Gastrocnemius medialis (tissue), 4 donors: ENCODE measurements at regions of chr19 and their contacts with region 1.

Region 1: DNA sequence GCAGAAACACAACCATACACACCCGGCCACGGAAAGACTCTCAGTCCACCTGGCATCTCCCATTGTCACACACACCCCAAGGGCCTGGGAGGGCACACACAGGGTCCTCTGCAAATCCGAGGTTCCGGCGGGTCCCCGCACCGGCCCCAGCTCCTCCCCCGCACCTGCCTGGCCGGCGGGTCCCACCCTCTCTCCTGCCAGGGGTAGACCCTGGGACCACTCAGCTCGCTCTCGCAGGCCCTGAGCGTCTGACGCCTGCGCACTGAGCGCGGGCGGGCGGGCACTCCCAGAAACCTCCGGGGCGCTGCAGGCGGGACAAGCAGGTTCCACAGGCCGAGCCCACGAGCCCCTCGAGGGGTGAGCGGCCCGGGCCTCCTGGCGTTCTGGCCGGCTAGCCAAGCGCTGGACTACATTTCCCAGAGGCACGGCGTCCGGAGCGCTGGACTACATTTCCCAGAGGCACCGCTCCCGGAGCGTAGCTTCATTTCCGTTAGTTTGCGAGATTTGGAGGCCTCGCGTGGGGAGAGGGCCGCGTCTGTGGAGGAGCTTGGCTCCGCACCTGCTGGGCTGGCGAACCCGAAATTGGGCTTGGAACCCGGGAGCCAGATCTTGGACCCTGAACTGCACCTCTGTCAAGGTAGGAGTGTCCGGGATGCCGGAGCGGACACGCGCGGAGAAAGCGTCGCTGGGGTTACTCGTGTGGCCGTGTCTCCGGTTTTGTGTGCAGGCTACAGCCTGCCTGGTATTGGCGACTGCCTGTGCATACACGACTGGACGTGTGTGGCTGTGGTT is at the start of gene ZNF420:
- DNase-seq: peak; percentile 86 to 92
- ATAC-seq: peak; percentile 98 to 99
- H3K4me3 ChIP-seq: peak within 1 kb of the TSS; percentile 82 to 98 (median 93)
- H3K27ac ChIP-seq: peak within 1 kb of the TSS; percentile 84 to 92 (median 89)
- H3K4me1 ChIP-seq: peaks cover 8 to 11% of the 10 kb centered on the region in 2 donors
- H3K27me3 ChIP-seq: no peaks in the 10 kb centered on the region
- CTCF ChIP-seq: no peak
- POLR2A ChIP-seq: peak in 1 of 2 donors; percentile 47
- total RNA-seq, gene ZNF420: 3.0 to 15.4 (median 3.7) TPM

Region 2: DNA sequence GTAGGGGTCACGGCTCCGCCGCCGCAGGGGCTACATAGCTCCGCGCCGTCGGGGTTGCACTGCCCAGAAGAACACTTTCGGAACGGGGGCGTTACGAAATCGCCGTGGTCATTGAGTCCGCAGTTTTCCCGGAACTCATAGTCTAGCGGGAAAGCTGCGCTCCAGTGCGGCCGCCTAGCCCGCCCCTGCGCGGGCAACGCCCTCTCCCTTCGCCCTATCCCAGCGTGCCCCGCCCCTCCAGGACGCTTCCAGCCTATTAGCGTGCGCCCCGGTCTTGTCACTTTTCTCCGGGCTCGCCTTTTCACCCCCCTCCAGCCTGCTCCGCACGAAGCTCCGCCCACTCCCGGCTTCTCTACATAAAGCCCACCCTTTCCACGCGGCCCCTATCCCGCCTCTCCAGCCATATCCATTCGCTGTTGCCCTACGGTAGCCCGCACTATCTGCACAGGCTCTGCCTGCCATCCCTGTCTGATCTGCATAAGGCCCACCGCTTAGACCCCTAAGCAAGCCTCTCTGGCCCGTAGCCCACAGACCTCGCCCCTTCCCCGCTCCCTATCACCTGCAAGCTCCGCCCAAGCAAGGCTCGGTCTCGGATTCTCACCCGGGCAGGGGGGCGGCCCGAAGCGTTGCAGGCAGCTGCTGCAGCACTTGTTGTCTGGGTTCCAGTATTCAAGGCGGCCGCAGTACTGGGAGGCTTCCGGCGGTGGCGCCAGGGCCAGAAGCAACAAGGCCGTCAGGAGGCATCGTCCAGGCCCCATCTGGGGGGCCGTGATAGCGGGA is 1337.5 kb before region 1 on chr19:
- in situ Hi-C with region 1: no loop called
- intact Hi-C with region 1: loop called (anchors 5 kb)
- DNase-seq: peak; percentile 96 to 98
- ATAC-seq: peak; percentile 74
- H3K4me3 ChIP-seq: peak overlapping the region; percentile 52 to 88 (median 78)
- H3K27ac ChIP-seq: peak overlapping the region; percentile 77 to 86 (median 82)
- H3K4me1 ChIP-seq: peaks cover 20 to 26% of the 10 kb centered on the region in 2 donors
- H3K27me3 ChIP-seq: no peaks in the 10 kb centered on the region
- CTCF ChIP-seq: peak in 3 of 5 experiments; percentile 9 to 34 (median 24)
- POLR2A ChIP-seq: peak in 1 of 2 donors; percentile 56

Region 3: GRCh38 chr19:36528194-36528920 is 549.8 kb before region 1 on chr19 and contains the start of gene ZNF260:
- in situ Hi-C with region 1: no loop called
- intact Hi-C with region 1: loop called (anchors 2 kb)
- DNase-seq: peak; percentile 96
- ATAC-seq: peak; percentile 99
- H3K4me3 ChIP-seq: peak within 1 kb of the TSS; percentile 71 to 83 (median 80)
- H3K27ac ChIP-seq: peak within 1 kb of the TSS; percentile 83 to 94 (median 90)
- H3K4me1 ChIP-seq: peaks cover 16 to 17% of the 10 kb centered on the region in 2 donors
- H3K27me3 ChIP-seq: no peaks in the 10 kb centered on the region
- CTCF ChIP-seq: no peak
- POLR2A ChIP-seq: peak; percentile 43 to 56
- total RNA-seq, gene ZNF260: 1.3 to 16.3 (median 3.2) TPM

Region 4: GRCh38 chr19:36687214-36688056 is 390.7 kb before region 1 on chr19 and contains the start of gene ZNF567:
- in situ Hi-C with region 1: no loop called
- intact Hi-C with region 1: loop called (anchors 5 kb)
- DNase-seq: peak; percentile 93 to 96
- ATAC-seq: peak; percentile 99
- H3K4me3 ChIP-seq: peak within 1 kb of the TSS; percentile 76 to 96 (median 90)
- H3K27ac ChIP-seq: peak within 1 kb of the TSS; percentile 77 to 87 (median 81)
- H3K4me1 ChIP-seq: peaks cover 13 to 16% of the 10 kb centered on the region in 2 donors
- H3K27me3 ChIP-seq: no peaks in the 10 kb centered on the region
- CTCF ChIP-seq: no peak
- POLR2A ChIP-seq: peak; percentile 68 to 74
- total RNA-seq, gene ZNF567: 1.1 to 3.5 (median 1.9) TPM

Region 5: GRCh38 chr19:36891768-36892357 is 186.3 kb before region 1 on chr19:
- in situ Hi-C with region 1: no loop called
- intact Hi-C with region 1: no loop called
- DNase-seq: no peak
- ATAC-seq: no peak
- H3K4me3 ChIP-seq: peak overlapping the region in 2 of 4 donors; percentile 6 to 41
- H3K27ac ChIP-seq: no peak overlapping the region
- H3K4me1 ChIP-seq: no peaks in the 10 kb centered on the region
- H3K27me3 ChIP-seq: peaks cover 0 to 5% (median 0%) of the 10 kb centered on the region in 3 donors
- CTCF ChIP-seq: no peak
- POLR2A ChIP-seq: no peak

Region 6: DNA sequence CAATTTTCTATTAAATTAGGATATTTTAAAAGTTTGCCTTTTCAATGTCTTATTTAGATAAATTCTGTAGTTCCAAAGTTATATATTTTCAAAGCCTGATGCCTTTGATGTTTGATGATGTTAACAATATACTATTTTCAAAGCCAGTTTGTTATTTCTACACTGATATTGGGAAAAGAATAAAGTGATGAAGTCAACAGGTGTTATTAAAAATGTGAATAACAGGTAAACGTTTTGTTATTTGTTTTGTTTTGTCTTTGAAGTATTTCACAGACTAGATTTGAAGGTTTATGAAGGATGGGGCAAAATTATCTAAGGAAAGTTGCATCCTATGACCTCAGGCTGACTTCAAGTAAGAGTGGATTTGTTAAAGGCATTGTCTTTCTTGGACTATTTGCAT is 33.0 kb before region 1 on chr19:
- in situ Hi-C with region 1: no loop called
- intact Hi-C with region 1: no loop called
- DNase-seq: no peak
- ATAC-seq: no peak
- H3K4me3 ChIP-seq: no peak overlapping the region
- H3K27ac ChIP-seq: no peak overlapping the region
- H3K4me1 ChIP-seq: no peaks in the 10 kb centered on the region
- H3K27me3 ChIP-seq: no peaks in the 10 kb centered on the region
- CTCF ChIP-seq: no peak
- POLR2A ChIP-seq: no peak

Region 7: DNA sequence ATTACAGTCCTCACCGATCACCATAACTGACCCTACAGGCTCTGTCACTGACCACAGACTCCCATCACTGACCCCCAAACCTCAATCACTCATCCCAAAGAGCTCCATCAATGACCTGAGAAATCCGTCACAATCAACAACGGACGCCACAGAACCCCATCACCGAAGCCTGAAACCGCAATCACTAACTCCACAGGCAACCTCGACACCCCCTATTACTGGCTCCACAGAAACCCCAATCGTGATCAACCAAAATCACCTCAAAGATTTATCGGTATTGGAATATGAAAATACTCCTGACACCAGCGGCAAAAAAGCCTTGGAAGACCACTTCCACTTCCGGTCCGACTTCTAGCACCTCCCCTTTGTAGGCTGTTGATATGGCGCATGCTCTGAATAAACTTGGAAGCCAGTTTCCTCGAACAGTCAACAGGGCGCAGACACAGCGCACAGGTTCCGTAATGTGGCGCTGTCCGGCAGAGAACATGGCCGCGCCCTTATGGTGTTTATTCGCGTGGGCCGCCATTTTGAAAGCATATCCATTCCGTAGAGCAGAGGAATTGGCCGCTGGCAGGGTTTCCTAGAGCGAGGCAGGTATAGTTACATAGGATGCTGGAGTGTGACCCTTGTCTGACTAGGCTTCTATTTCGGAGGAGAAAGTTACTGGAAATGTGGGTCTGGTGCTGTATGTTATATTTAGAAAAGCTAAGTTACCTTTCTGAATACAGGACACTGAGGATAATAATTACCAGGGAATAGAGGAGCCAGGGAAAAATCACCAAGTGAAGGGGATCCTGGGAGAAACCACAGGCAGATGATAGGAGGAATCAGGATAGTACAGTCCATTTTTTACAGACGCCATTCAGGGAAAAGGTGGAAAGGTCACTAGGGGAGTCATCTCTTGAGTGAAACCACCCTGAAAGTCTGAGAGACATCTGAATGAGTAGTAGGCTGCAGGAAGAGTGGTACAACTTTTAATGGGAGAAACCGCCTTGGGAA is 94.5 kb after region 1 on chr19 and contains the start of gene ZNF585A:
- in situ Hi-C with region 1: no loop called
- intact Hi-C with region 1: loop called (anchors 1 kb)
- DNase-seq: peak; percentile 90 to 93
- ATAC-seq: peak; percentile 100
- H3K4me3 ChIP-seq: peak within 1 kb of the TSS; percentile 74 to 85 (median 80)
- H3K27ac ChIP-seq: peak within 1 kb of the TSS; percentile 80 to 90 (median 84)
- H3K4me1 ChIP-seq: peaks cover 7 to 12% of the 10 kb centered on the region in 2 donors
- H3K27me3 ChIP-seq: no peaks in the 10 kb centered on the region
- CTCF ChIP-seq: peak in 2 of 5 experiments; percentile 21 to 32
- POLR2A ChIP-seq: peak in 1 of 2 donors; percentile 14
- total RNA-seq, gene ZNF585A: 2.0 to 10.5 (median 6.0) TPM

Region 8: DNA sequence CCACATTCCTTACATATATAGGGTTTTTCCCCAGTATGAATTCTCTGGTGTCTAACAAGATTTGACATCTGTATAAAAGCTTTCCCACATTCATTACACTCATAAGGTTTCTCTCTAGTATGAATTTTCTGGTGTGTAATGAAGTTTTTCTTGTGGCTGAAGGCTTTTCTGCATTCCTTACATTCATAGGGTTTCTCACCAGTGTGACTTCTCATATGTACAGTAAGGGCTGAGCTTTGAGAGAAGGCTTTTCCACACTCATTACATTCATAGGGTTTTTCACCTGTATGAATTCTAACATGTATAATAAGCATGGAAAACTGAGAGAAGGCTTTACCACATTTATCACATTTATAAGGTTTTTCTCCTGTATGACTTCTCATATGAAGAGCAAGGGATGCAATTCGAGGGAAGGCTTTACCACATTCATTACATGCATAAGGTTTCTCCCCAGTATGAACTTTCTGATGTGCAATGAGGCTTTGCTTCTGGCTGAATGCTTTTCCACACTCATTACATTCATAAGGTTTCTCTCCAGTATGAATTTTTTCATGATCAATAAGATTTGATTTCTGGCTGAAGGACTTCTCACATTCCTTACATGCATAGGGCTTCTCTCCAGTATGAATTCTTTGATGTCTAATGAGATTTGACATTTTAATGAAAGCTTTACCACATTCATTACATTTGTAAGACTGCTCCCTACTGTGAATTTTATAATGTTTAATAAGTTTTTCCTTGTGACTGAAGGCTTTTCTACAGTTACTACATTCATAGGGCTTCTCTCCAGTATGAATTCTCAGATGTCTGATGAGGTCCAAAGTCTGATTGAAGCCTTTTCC is 335.3 kb after region 1 on chr19:
- in situ Hi-C with region 1: no loop called
- intact Hi-C with region 1: no loop called
- DNase-seq: no peak
- ATAC-seq: no peak
- H3K4me3 ChIP-seq: peak overlapping the region in 1 of 4 donors; percentile 40
- H3K27ac ChIP-seq: no peak overlapping the region
- H3K4me1 ChIP-seq: no peaks in the 10 kb centered on the region
- H3K27me3 ChIP-seq: no peaks in the 10 kb centered on the region
- CTCF ChIP-seq: no peak
- POLR2A ChIP-seq: no peak

Region 9: DNA sequence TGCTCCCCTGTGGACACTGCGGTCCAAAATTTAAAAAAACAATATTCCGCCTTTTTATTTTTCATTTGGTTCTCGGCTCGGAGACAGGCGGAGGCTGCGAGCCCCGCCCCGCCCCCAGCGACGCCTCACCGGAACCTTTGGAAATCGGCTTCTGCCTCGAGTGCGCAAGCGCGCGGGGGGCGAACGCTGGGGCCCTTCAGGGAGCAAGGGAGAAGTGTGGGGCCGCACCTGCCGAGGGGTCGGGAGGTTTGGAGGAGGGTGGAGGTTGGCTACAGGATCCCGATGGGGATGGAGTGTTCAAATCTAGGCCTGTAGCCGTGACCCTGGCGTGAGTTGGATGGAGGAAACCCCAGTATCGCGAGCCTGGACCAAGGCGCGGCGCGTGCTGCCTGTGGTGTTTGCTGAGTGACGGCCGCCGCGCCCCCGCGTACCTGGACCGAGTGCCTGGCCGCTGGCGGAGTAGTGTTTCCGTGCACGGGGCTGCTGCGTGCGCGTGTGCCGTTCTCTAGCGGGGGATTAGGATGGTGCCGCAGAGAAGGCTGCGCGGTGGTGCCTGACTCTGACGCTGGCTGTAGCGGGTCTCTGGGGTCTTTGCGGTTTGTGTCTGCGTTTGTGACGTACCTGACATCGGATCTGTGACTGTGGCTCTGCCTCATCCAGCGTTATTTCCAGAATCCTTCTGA is 577.7 kb after region 1 on chr19:
- in situ Hi-C with region 1: no loop called
- intact Hi-C with region 1: loop called (anchors 5 kb)
- DNase-seq: peak; percentile 63 to 81
- ATAC-seq: peak; percentile 85 to 93
- H3K4me3 ChIP-seq: peak overlapping the region; percentile 75 to 94 (median 84)
- H3K27ac ChIP-seq: peak overlapping the region; percentile 90 to 94 (median 93)
- H3K4me1 ChIP-seq: peaks cover 21 to 22% of the 10 kb centered on the region in 2 donors
- H3K27me3 ChIP-seq: no peaks in the 10 kb centered on the region
- CTCF ChIP-seq: peak in 1 of 5 experiments; percentile 31
- POLR2A ChIP-seq: peak; percentile 29 to 32